ENCODE measurements at regions of chrX and their contacts with region 1.

Region 1: GRCh38 chrX:102652031-102652688 is 877 bp downstream of the GPRASP1 start:
- DNase-seq: peak in 8 of 9 donors; percentile 19 to 83 (median 78)
- ATAC-seq: peak; percentile 89
- H3K4me3 ChIP-seq: peak overlapping the region; percentile 83
- H3K4me3 Mint-ChIP-seq: peak overlapping the region; percentile 83 to 100 (median 94)
- H3K27ac ChIP-seq: peak overlapping the region; percentile 88
- H3K27ac Mint-ChIP-seq: peak overlapping the region; percentile 69 to 99 (median 95)
- H3K4me1 ChIP-seq: peaks cover 4 to 5% of the 10 kb centered on the region in 2 donors
- H3K4me1 Mint-ChIP-seq: peaks cover 13 to 48% (median 35%) of the 10 kb centered on the region in 7 donors
- H3K27me3 ChIP-seq: no peaks in the 10 kb centered on the region
- H3K27me3 Mint-ChIP-seq: peaks cover 0 to 9% (median 0%) of the 10 kb centered on the region in 5 donors

Region 2: GRCh38 chrX:102712952-102713625 is 60.9 kb after region 1 on chrX:
- CTCF ChIA-PET with region 1: no interaction called
- POLR2A ChIA-PET with region 1: no interaction called
- intact Hi-C with region 1: loop called in 1 of 2 experiments (anchors 5 kb)
- DNase-seq: peak in 7 of 9 donors; percentile 9 to 33 (median 23)
- ATAC-seq: no peak
- H3K4me3 ChIP-seq: peak overlapping the region; percentile 50
- H3K4me3 Mint-ChIP-seq: peak overlapping the region; percentile 70 to 94 (median 88)
- H3K27ac ChIP-seq: peak overlapping the region; percentile 14
- H3K27ac Mint-ChIP-seq: peak overlapping the region in 6 of 9 donors; percentile 36 to 93 (median 56)
- H3K4me1 ChIP-seq: peaks cover 0 to 8% of the 10 kb centered on the region in 2 donors
- H3K4me1 Mint-ChIP-seq: peaks cover 5 to 36% (median 25%) of the 10 kb centered on the region in 7 donors
- H3K27me3 ChIP-seq: no peaks in the 10 kb centered on the region
- H3K27me3 Mint-ChIP-seq: peaks cover 5 to 31% (median 8%) of the 10 kb centered on the region in 5 donors

Region 3: GRCh38 chrX:103431316-103431715 is 779.2 kb after region 1 on chrX:
- CTCF ChIA-PET with region 1: no interaction called
- POLR2A ChIA-PET with region 1: no interaction called
- intact Hi-C with region 1: no loop called
- DNase-seq: no peak
- ATAC-seq: no peak
- H3K4me3 ChIP-seq: no peak overlapping the region
- H3K4me3 Mint-ChIP-seq: no peak overlapping the region
- H3K27ac ChIP-seq: no peak overlapping the region
- H3K27ac Mint-ChIP-seq: no peak overlapping the region
- H3K4me1 ChIP-seq: no peaks in the 10 kb centered on the region
- H3K4me1 Mint-ChIP-seq: no peaks in the 10 kb centered on the region
- H3K27me3 ChIP-seq: no peaks in the 10 kb centered on the region
- H3K27me3 Mint-ChIP-seq: peaks cover 0 to 11% (median 0%) of the 10 kb centered on the region in 5 donors

Measured in naive thymus-derived CD4-positive, alpha-beta T cell (primary cell).